CD4-positive, alpha-beta memory T cell (primary cell): ENCODE measurements at regions of chr12 and their contacts with region 1.

Region 1: GRCh38 chr12:49623142-49623904 is at the start of gene PRPF40B:
- DNase-seq: peak; percentile 88 to 90 (median 89)
- H3K4me3 ChIP-seq: peak within 1 kb of the TSS; percentile 73 to 94
- H3K4me3 Mint-ChIP-seq: peak within 1 kb of the TSS; percentile 87 to 93 (median 90)
- H3K27ac ChIP-seq: peak within 1 kb of the TSS; percentile 65
- H3K27ac Mint-ChIP-seq: peak within 1 kb of the TSS; percentile 93 to 98 (median 94)
- H3K4me1 ChIP-seq: peaks cover 22% of the 10 kb centered on the region
- H3K4me1 Mint-ChIP-seq: peaks cover 15 to 42% (median 21%) of the 10 kb centered on the region in 4 donors
- H3K27me3 ChIP-seq: no peaks in the 10 kb centered on the region
- H3K27me3 Mint-ChIP-seq: no peaks in the 10 kb centered on the region
- total RNA-seq, gene PRPF40B: 15.1 to 15.9 TPM

Region 2: GRCh38 chr12:49538510-49539403 is 84.6 kb before region 1 on chr12 and contains the start of gene KCNH3:
- CTCF ChIA-PET with region 1: no interaction called
- POLR2A ChIA-PET with region 1: interaction called, 5 read pairs
- intact Hi-C with region 1: loop called (anchors 1 kb)
- DNase-seq: peak; percentile 86 to 95 (median 88)
- H3K4me3 ChIP-seq: peak within 1 kb of the TSS; percentile 62 to 69
- H3K4me3 Mint-ChIP-seq: peak within 1 kb of the TSS; percentile 73 to 85 (median 79)
- H3K27ac ChIP-seq: no peak within 1 kb of the TSS
- H3K27ac Mint-ChIP-seq: peak within 1 kb of the TSS in 6 of 7 donors; percentile 46 to 70 (median 66)
- H3K4me1 ChIP-seq: peaks cover 21% of the 10 kb centered on the region
- H3K4me1 Mint-ChIP-seq: peaks cover 8 to 38% (median 19%) of the 10 kb centered on the region in 4 donors
- H3K27me3 ChIP-seq: no peaks in the 10 kb centered on the region
- H3K27me3 Mint-ChIP-seq: peaks cover 0 to 5% of the 10 kb centered on the region in 2 donors
- total RNA-seq, gene KCNH3: 1.3 to 2.4 TPM

Region 3: DNA sequence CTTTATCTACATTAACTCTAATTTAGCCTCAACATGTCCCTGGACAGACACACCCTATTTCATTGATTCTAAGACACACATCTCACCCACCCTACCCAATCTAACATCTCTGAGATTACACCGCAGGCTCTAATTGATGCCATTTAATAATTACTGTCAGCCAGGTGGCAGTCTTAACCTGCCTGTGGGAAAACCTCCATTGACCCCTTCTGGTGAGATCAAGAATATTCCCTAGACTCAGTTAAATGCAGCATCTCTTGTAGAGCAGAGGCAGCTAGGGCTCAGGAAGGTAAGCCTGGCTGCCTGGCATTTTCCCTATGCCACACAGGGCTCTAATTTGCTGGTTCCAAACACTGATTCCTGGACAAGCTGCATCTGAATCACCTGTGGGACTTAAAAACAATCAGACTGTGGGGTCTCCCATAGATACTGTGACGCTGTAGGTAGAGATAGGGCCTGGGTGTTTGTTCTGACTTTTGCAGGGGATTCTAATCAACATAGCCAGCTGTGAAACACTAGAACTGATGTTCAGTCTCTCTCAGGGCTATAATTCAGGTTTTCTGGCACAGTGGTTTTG is 69.7 kb before region 1 on chr12:
- CTCF ChIA-PET with region 1: interaction called, 16 read pairs
- POLR2A ChIA-PET with region 1: interaction called, 10 read pairs
- intact Hi-C with region 1: loop called (anchors 1 kb)
- DNase-seq: peak in 4 of 5 donors; percentile 37 to 59 (median 50)
- H3K4me3 ChIP-seq: no peak overlapping the region
- H3K4me3 Mint-ChIP-seq: no peak overlapping the region
- H3K27ac ChIP-seq: no peak overlapping the region
- H3K27ac Mint-ChIP-seq: peak overlapping the region in 3 of 7 donors; percentile 14 to 54 (median 21)
- H3K4me1 ChIP-seq: peaks cover 4% of the 10 kb centered on the region
- H3K4me1 Mint-ChIP-seq: peaks cover 5 to 11% (median 8%) of the 10 kb centered on the region in 4 donors
- H3K27me3 ChIP-seq: peaks cover 3% of the 10 kb centered on the region
- H3K27me3 Mint-ChIP-seq: peaks cover 3 to 12% of the 10 kb centered on the region in 2 donors

Region 4: GRCh38 chr12:49567611-49568441 is 55.5 kb before region 1 on chr12 and contains the start of gene MCRS1:
- CTCF ChIA-PET with region 1: interaction called, 6 read pairs
- POLR2A ChIA-PET with region 1: interaction called, 18 read pairs
- intact Hi-C with region 1: loop called (anchors 1 kb)
- DNase-seq: peak; percentile 92 to 94 (median 93)
- H3K4me3 ChIP-seq: peak within 1 kb of the TSS; percentile 88 to 100
- H3K4me3 Mint-ChIP-seq: peak within 1 kb of the TSS; percentile 92 to 100 (median 99)
- H3K27ac ChIP-seq: peak within 1 kb of the TSS; percentile 89
- H3K27ac Mint-ChIP-seq: peak within 1 kb of the TSS; percentile 93 to 100 (median 99)
- H3K4me1 ChIP-seq: peaks cover 49% of the 10 kb centered on the region
- H3K4me1 Mint-ChIP-seq: peaks cover 32 to 71% (median 54%) of the 10 kb centered on the region in 4 donors
- H3K27me3 ChIP-seq: no peaks in the 10 kb centered on the region
- H3K27me3 Mint-ChIP-seq: no peaks in the 10 kb centered on the region
- total RNA-seq, gene MCRS1: 77.0 to 78.4 TPM

Region 5: DNA sequence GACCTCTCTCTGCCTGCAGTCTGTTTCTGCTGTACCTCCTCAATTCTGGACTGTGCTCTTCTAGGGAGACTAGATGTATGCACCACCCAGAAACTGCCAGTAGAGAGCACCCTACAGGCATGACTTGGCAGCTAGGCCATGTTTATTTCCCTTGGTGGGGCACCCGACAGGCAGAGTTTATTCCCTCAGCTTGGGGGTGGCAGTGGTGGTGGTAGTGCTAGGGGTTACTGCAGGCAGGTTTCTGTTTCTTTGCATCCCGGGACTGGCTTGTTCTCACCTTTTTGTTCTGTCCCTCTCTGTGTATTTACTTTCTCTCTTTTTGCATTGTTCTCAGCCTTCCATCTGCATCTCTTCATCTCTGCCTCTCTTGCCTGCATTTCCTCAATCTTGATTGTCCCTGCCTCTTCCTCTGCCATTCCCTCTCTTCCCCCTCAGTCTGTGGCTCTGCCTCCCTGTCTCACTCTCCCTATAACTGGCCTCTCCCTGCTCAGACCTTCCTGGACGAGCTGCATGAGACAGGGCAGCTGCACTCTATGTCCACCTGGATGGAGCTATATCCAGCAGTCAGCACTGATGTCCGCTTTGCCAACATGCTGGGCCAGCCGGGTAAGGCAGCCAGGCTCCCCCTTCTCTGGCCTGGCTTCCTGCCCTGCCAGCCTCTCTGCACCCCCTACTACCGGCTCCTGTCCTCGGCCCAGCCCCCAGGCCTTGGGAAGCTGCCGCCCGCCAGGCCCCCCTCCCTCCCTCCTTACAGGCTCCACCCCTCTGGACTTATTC is 13.8 kb after region 1 on chr12:
- CTCF ChIA-PET with region 1: interaction called, 32 read pairs
- POLR2A ChIA-PET with region 1: interaction called, 34 read pairs
- intact Hi-C with region 1: no loop called
- DNase-seq: peak; percentile 53 to 71 (median 59)
- H3K4me3 ChIP-seq: no peak overlapping the region
- H3K4me3 Mint-ChIP-seq: no peak overlapping the region
- H3K27ac ChIP-seq: no peak overlapping the region
- H3K27ac Mint-ChIP-seq: peak overlapping the region in 5 of 7 donors; percentile 2 to 81 (median 30)
- H3K4me1 ChIP-seq: peaks cover 8% of the 10 kb centered on the region
- H3K4me1 Mint-ChIP-seq: peaks cover 9 to 13% (median 11%) of the 10 kb centered on the region in 4 donors
- H3K27me3 ChIP-seq: no peaks in the 10 kb centered on the region
- H3K27me3 Mint-ChIP-seq: no peaks in the 10 kb centered on the region

Region 6: GRCh38 chr12:49662998-49663843 is 39.9 kb after region 1 on chr12:
- CTCF ChIA-PET with region 1: interaction called, 6 read pairs
- POLR2A ChIA-PET with region 1: interaction called, 12 read pairs
- intact Hi-C with region 1: no loop called
- DNase-seq: peak; percentile 71 to 93 (median 75)
- H3K4me3 ChIP-seq: peak overlapping the region; percentile 48 to 50
- H3K4me3 Mint-ChIP-seq: peak overlapping the region; percentile 61 to 91 (median 84)
- H3K27ac ChIP-seq: peak overlapping the region; percentile 57
- H3K27ac Mint-ChIP-seq: peak overlapping the region; percentile 92 to 99 (median 97)
- H3K4me1 ChIP-seq: peaks cover 52% of the 10 kb centered on the region
- H3K4me1 Mint-ChIP-seq: peaks cover 56 to 84% (median 67%) of the 10 kb centered on the region in 4 donors
- H3K27me3 ChIP-seq: no peaks in the 10 kb centered on the region
- H3K27me3 Mint-ChIP-seq: no peaks in the 10 kb centered on the region

Region 7: GRCh38 chr12:49821373-49822287 is 198.3 kb after region 1 on chr12:
- CTCF ChIA-PET with region 1: no interaction called
- POLR2A ChIA-PET with region 1: no interaction called
- intact Hi-C with region 1: no loop called
- DNase-seq: no peak
- H3K4me3 ChIP-seq: no peak overlapping the region
- H3K4me3 Mint-ChIP-seq: peak overlapping the region in 2 of 8 donors; percentile 15 to 34
- H3K27ac ChIP-seq: no peak overlapping the region
- H3K27ac Mint-ChIP-seq: peak overlapping the region in 3 of 7 donors; percentile 22 to 73 (median 48)
- H3K4me1 ChIP-seq: peaks cover 22% of the 10 kb centered on the region
- H3K4me1 Mint-ChIP-seq: peaks cover 14 to 39% (median 26%) of the 10 kb centered on the region in 4 donors
- H3K27me3 ChIP-seq: no peaks in the 10 kb centered on the region
- H3K27me3 Mint-ChIP-seq: no peaks in the 10 kb centered on the region

Region 8: GRCh38 chr12:50074936-50075807 is 451.8 kb after region 1 on chr12:
- CTCF ChIA-PET with region 1: no interaction called
- POLR2A ChIA-PET with region 1: no interaction called
- intact Hi-C with region 1: no loop called
- DNase-seq: peak; percentile 67 to 77 (median 72)
- H3K4me3 ChIP-seq: no peak overlapping the region
- H3K4me3 Mint-ChIP-seq: no peak overlapping the region
- H3K27ac ChIP-seq: no peak overlapping the region
- H3K27ac Mint-ChIP-seq: peak overlapping the region in 2 of 7 donors; percentile 64 to 79
- H3K4me1 ChIP-seq: peaks cover 3% of the 10 kb centered on the region
- H3K4me1 Mint-ChIP-seq: peaks cover 5 to 11% (median 7%) of the 10 kb centered on the region in 4 donors
- H3K27me3 ChIP-seq: no peaks in the 10 kb centered on the region
- H3K27me3 Mint-ChIP-seq: peaks cover 0 to 5% of the 10 kb centered on the region in 2 donors